ENCODE measurements at regions of chr4 and their contacts with region 1.

Region 1: GRCh38 chr4:39458505-39459300 is at the starts of genes LIAS and RPL9:
- DNase-seq: peak; percentile 92 to 96 (median 94)
- H3K4me3 ChIP-seq: peak within 1 kb of the TSS; percentile 96 to 97
- H3K4me3 Mint-ChIP-seq: peak within 1 kb of the TSS; percentile 96 to 99 (median 98)
- H3K27ac ChIP-seq: peak within 1 kb of the TSS; percentile 99
- H3K27ac Mint-ChIP-seq: peak within 1 kb of the TSS; percentile 99 to 100 (median 100)
- H3K4me1 ChIP-seq: peaks cover 33% of the 10 kb centered on the region
- H3K4me1 Mint-ChIP-seq: peaks cover 22 to 55% (median 33%) of the 10 kb centered on the region in 4 donors
- H3K27me3 ChIP-seq: no peaks in the 10 kb centered on the region
- H3K27me3 Mint-ChIP-seq: no peaks in the 10 kb centered on the region
- total RNA-seq, gene LIAS: 21.7 to 24.7 TPM
- total RNA-seq, gene RPL9: 2,318 to 2,449 TPM

Region 2: DNA sequence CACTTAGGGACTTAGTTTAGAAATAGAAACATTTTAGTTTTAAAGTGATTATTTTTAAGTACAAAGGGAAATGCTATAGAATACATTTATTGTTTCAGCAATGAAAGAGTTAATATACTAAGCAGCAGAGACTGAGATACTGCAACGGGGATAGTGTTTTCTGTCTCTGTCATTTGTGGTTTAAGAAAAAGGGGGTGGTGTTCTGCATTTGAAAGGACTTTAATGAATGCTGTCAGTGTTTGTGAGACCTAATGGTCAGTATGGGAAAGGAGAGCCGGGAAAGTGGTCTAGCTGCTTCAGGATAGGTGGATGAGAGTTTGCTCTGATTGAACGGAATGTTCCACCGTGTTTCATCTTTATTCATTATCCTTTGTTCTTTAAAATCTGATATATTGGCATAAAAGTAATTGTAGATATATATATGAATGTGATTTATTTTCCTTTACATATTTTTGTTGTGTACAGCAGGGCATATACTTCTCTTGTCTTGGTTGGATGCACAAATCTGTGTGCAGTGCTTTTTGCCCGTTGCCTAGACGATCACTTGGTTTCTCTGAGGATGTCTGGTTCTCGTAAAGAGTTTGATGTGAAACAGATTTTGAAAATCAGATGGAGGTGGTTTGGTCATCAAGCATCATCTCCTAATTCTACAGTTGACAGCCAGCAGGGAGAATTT is 396.5 kb before region 1 on chr4 and contains the start of gene KLHL5:
- CTCF ChIA-PET with region 1: no interaction called
- POLR2A ChIA-PET with region 1: no interaction called
- intact Hi-C with region 1: no loop called
- DNase-seq: no peak
- H3K4me3 ChIP-seq: no peak within 1 kb of the TSS
- H3K4me3 Mint-ChIP-seq: peak within 1 kb of the TSS in 1 of 8 donors; percentile 23
- H3K27ac ChIP-seq: no peak within 1 kb of the TSS
- H3K27ac Mint-ChIP-seq: peak within 1 kb of the TSS in 3 of 7 donors; percentile 27 to 61 (median 60)
- H3K4me1 ChIP-seq: peaks cover 18% of the 10 kb centered on the region
- H3K4me1 Mint-ChIP-seq: peaks cover 25 to 38% (median 28%) of the 10 kb centered on the region in 4 donors
- H3K27me3 ChIP-seq: no peaks in the 10 kb centered on the region
- H3K27me3 Mint-ChIP-seq: no peaks in the 10 kb centered on the region
- total RNA-seq, gene KLHL5: 37.6 to 38.4 TPM

Region 3: GRCh38 chr4:39181905-39182638 is 276.6 kb before region 1 on chr4 and contains the start of gene WDR19:
- CTCF ChIA-PET with region 1: no interaction called
- POLR2A ChIA-PET with region 1: interaction called, 5 read pairs
- intact Hi-C with region 1: loop called (anchors 1 kb)
- DNase-seq: peak; percentile 98 to 99 (median 98)
- H3K4me3 ChIP-seq: peak within 1 kb of the TSS; percentile 78 to 95
- H3K4me3 Mint-ChIP-seq: no peak within 1 kb of the TSS
- H3K27ac ChIP-seq: peak within 1 kb of the TSS; percentile 65
- H3K27ac Mint-ChIP-seq: peak within 1 kb of the TSS in 2 of 7 donors; percentile 4 to 39
- H3K4me1 ChIP-seq: peaks cover 12% of the 10 kb centered on the region
- H3K4me1 Mint-ChIP-seq: peaks cover 3 to 9% (median 5%) of the 10 kb centered on the region in 4 donors
- H3K27me3 ChIP-seq: no peaks in the 10 kb centered on the region
- H3K27me3 Mint-ChIP-seq: peaks cover under 1 to 9% of the 10 kb centered on the region in 2 donors
- total RNA-seq, gene WDR19: 31.6 to 36.8 TPM

Region 4: GRCh38 chr4:39365830-39366771 is 92.6 kb before region 1 on chr4 and contains the start of gene RFC1:
- CTCF ChIA-PET with region 1: no interaction called
- POLR2A ChIA-PET with region 1: interaction called, 30 read pairs
- intact Hi-C with region 1: loop called (anchors 2 kb)
- DNase-seq: peak; percentile 89 to 94 (median 90)
- H3K4me3 ChIP-seq: peak within 1 kb of the TSS; percentile 85
- H3K4me3 Mint-ChIP-seq: peak within 1 kb of the TSS; percentile 90 to 96 (median 93)
- H3K27ac ChIP-seq: peak within 1 kb of the TSS; percentile 83
- H3K27ac Mint-ChIP-seq: peak within 1 kb of the TSS; percentile 90 to 97 (median 94)
- H3K4me1 ChIP-seq: peaks cover 38% of the 10 kb centered on the region
- H3K4me1 Mint-ChIP-seq: peaks cover 22 to 44% (median 29%) of the 10 kb centered on the region in 4 donors
- H3K27me3 ChIP-seq: no peaks in the 10 kb centered on the region
- H3K27me3 Mint-ChIP-seq: no peaks in the 10 kb centered on the region
- total RNA-seq, gene RFC1: 62.5 to 70.6 TPM

Region 5: DNA sequence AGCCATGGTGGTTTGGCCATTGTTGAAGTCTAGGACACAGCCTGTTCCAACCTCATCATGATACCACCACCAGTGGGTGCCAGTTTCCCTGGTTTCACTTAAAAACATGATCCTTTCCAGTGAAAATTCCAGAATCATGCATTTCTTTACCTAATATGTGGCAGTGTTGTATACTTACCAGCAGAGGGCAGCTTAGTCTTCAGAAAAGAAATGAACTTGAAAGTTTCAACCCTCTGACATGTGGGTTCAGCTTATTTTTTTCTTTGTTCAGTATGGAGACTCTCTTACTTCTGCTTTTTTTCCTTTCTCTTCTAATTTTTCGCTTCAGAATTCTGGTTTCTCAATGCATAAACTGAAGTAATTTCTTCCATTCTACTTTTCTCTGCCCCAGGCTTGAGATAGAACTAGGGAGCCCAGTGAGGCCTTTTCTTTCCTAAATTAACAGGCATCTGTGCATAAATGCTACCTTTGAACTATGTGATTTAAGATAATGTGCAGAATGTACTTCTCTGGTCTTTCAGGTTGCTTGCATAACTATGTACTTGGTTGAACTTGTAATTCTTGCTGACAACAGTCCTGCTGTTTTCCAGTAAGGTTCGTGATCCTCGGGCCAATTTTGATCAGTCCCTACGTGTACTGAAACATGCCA is 10.8 kb after region 1 on chr4:
- CTCF ChIA-PET with region 1: interaction called, 10 read pairs
- POLR2A ChIA-PET with region 1: interaction called, 16 read pairs
- intact Hi-C with region 1: no loop called
- DNase-seq: peak in 4 of 5 donors; percentile 45 to 58 (median 50)
- H3K4me3 ChIP-seq: no peak overlapping the region
- H3K4me3 Mint-ChIP-seq: no peak overlapping the region
- H3K27ac ChIP-seq: no peak overlapping the region
- H3K27ac Mint-ChIP-seq: peak overlapping the region in 3 of 7 donors; percentile 11 to 29 (median 22)
- H3K4me1 ChIP-seq: no peaks in the 10 kb centered on the region
- H3K4me1 Mint-ChIP-seq: peaks cover 0 to 1% (median 0%) of the 10 kb centered on the region in 4 donors
- H3K27me3 ChIP-seq: no peaks in the 10 kb centered on the region
- H3K27me3 Mint-ChIP-seq: no peaks in the 10 kb centered on the region

Region 6: GRCh38 chr4:39638354-39639240 is 179.9 kb after region 1 on chr4 and contains the start of gene SMIM14:
- CTCF ChIA-PET with region 1: no interaction called
- POLR2A ChIA-PET with region 1: interaction called, 18 read pairs
- intact Hi-C with region 1: loop called (anchors 5 kb)
- DNase-seq: peak; percentile 84 to 91 (median 86)
- H3K4me3 ChIP-seq: peak within 1 kb of the TSS; percentile 52 to 95
- H3K4me3 Mint-ChIP-seq: peak within 1 kb of the TSS; percentile 87 to 99 (median 92)
- H3K27ac ChIP-seq: peak within 1 kb of the TSS; percentile 77
- H3K27ac Mint-ChIP-seq: peak within 1 kb of the TSS; percentile 74 to 98 (median 96)
- H3K4me1 ChIP-seq: peaks cover 27% of the 10 kb centered on the region
- H3K4me1 Mint-ChIP-seq: peaks cover 20 to 54% (median 32%) of the 10 kb centered on the region in 4 donors
- H3K27me3 ChIP-seq: no peaks in the 10 kb centered on the region
- H3K27me3 Mint-ChIP-seq: no peaks in the 10 kb centered on the region
- total RNA-seq, gene SMIM14: 15.5 to 19.4 TPM

Region 7: GRCh38 chr4:40056716-40057585 is 598.2 kb after region 1 on chr4 and contains the start of gene N4BP2:
- CTCF ChIA-PET with region 1: no interaction called
- POLR2A ChIA-PET with region 1: interaction called, 3 read pairs
- intact Hi-C with region 1: loop called (anchors 5 kb)
- DNase-seq: peak; percentile 60 to 78 (median 75)
- H3K4me3 ChIP-seq: peak within 1 kb of the TSS; percentile 82 to 100
- H3K4me3 Mint-ChIP-seq: peak within 1 kb of the TSS; percentile 93 to 99 (median 97)
- H3K27ac ChIP-seq: peak within 1 kb of the TSS; percentile 75
- H3K27ac Mint-ChIP-seq: peak within 1 kb of the TSS; percentile 93 to 99 (median 97)
- H3K4me1 ChIP-seq: peaks cover 36% of the 10 kb centered on the region
- H3K4me1 Mint-ChIP-seq: peaks cover 18 to 48% (median 32%) of the 10 kb centered on the region in 4 donors
- H3K27me3 ChIP-seq: no peaks in the 10 kb centered on the region
- H3K27me3 Mint-ChIP-seq: no peaks in the 10 kb centered on the region
- total RNA-seq, gene N4BP2: 15.0 to 16.7 TPM